Heart right ventricle (tissue), 16 donors: ENCODE measurements at regions of chr13 and their contacts with region 1.

Region 1: GRCh38 chr13:106917673-106918556 is 350.0 kb upstream of the ARGLU1 start:
- DNase-seq: peak; percentile 77 to 82
- ATAC-seq: peak; percentile 86 to 93 (median 90)
- H3K4me3 ChIP-seq: peak overlapping the region; percentile 45 to 76 (median 63)
- H3K27ac ChIP-seq: peak overlapping the region; percentile 84 to 98 (median 95)
- H3K4me1 ChIP-seq: peaks cover 0 to 48% (median 17%) of the 10 kb centered on the region in 9 donors
- H3K27me3 ChIP-seq: peaks cover 0 to 3% (median 0%) of the 10 kb centered on the region in 7 donors
- CTCF ChIP-seq: peak; percentile 87 to 98 (median 95)

Region 2: DNA sequence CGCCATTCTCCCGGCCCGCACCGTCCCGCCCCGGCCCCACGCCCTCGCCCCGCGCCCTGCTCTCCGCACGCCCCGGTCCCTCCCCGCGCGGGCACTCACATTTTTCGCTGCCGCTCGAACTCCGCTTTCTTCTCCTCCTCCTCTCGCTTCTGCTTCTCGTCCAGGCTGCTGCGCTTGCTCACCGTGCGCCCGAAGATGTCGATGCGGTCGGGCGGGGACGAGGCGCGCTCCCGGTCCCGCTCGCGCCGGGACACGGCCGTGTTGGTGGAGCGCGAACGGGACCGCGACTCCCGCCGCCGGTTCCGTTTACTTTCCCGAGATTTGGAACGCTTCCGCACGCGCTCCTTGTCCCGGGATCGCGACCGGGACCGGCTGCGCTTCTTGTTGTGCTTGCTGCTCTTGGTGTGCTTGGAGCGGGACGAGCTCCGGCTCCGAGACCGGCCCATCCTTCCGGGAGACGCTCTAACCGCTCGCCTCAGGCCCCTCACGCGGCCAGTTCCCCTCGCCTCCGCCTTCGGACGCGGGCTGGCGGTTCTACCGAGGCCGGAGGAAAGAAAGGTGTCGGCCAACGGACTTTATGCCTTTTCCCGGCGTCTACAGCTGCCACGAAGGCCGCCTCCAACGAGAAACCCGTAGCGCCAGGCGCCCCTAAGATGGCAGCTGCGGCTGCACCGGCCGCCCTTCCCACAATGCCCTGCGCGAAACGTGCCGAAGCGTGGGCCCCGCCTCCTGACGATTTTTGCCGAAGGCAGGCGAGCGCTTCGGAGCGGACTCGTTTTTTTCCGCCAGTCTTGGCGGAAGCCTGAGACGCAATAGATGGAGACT is 350.2 kb before region 1 on chr13 and contains the start of gene ARGLU1:
- intact Hi-C with region 1: loop called in 2 of 10 experiments (anchors 10 kb)
- DNase-seq: peak; percentile 94 to 96
- ATAC-seq: peak; percentile 90 to 98 (median 96)
- H3K4me3 ChIP-seq: peak within 1 kb of the TSS; percentile 66 to 96 (median 87)
- H3K27ac ChIP-seq: peak within 1 kb of the TSS; percentile 92 to 99 (median 97)
- H3K4me1 ChIP-seq: peaks cover 15 to 54% (median 44%) of the 10 kb centered on the region in 9 donors
- H3K27me3 ChIP-seq: no peaks in the 10 kb centered on the region
- CTCF ChIP-seq: no peak
- total RNA-seq, gene ARGLU1: 19.1 to 42.2 (median 29.6) TPM

Region 3: DNA sequence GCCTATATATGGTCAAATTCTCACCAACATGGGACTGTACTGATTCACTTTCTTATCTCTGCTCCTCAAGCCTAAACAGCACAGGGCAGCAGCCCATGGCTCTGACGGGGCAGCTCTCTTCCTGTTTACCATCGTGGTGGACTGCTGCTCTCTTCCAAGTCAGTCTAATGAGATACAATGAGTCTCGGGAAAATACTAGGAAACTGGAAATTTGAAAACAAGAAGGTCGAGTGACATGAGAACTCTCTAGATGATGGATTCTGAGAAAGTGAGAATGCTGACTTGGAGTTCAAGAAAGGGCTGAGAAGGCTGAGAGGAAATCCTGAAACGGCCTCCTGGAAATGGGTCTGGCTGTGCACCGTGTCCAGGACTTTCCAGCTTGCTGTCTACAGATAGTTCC is 227.1 kb before region 1 on chr13:
- intact Hi-C with region 1: loop called in 2 of 10 experiments (anchors 5 to 10 kb)
- DNase-seq: peak in 1 of 2 donors; percentile 14
- ATAC-seq: peak; percentile 34 to 84 (median 73)
- H3K4me3 ChIP-seq: no peak overlapping the region
- H3K27ac ChIP-seq: peak overlapping the region in 9 of 10 donors; percentile 8 to 74 (median 42)
- H3K4me1 ChIP-seq: peaks cover 0 to 24% (median 1%) of the 10 kb centered on the region in 9 donors
- H3K27me3 ChIP-seq: no peaks in the 10 kb centered on the region
- CTCF ChIP-seq: no peak

Region 4: DNA sequence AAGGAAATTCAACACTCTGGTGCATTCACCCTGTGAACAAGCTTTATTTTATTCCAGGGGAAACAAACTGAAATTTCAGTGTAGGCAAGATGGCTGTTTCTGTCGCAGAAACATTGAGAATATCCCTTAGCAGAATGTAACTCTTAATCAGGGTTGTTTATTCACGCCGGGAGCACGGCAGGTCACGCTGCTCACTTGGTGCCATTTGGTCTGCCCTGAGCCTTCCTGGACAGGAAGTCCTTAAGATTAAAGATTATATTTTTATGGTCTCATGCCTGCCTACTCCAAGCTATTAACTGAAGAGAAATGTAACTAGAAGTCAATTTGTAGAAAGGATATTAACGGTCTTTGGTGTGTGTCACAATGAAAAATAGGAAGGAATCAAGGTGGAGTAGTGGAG is 164.7 kb before region 1 on chr13:
- intact Hi-C with region 1: loop called in 3 of 10 experiments (anchors 5 to 10 kb)
- DNase-seq: peak; percentile 35 to 47
- ATAC-seq: peak in 7 of 8 donors; percentile 45 to 83 (median 79)
- H3K4me3 ChIP-seq: peak overlapping the region in 2 of 10 donors; percentile 15 to 19
- H3K27ac ChIP-seq: peak overlapping the region in 8 of 10 donors; percentile 31 to 71 (median 54)
- H3K4me1 ChIP-seq: peaks cover 0 to 43% (median 7%) of the 10 kb centered on the region in 9 donors
- H3K27me3 ChIP-seq: no peaks in the 10 kb centered on the region
- CTCF ChIP-seq: no peak

Region 5: DNA sequence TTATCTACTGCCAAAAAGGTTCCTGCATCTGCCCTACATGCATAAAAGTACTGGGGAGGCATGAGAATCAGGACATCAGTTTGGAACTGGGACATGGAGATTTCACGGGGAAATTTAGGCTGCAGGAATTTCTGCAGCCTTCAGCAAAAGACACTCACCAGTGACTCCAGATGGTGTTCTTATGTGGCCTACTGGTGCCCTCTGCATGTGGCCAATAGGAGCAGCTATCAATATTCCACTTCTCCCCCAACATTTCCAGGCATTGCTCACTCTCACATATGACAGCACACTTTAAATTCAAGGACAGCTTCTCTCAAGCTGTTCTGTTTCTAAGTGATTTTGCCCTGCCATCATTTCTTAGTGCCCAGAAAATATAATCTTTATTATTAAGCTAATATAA is 220.6 kb after region 1 on chr13:
- intact Hi-C with region 1: loop called in 2 of 10 experiments (anchors 5 kb)
- DNase-seq: no peak
- ATAC-seq: peak in 2 of 8 donors; percentile 25 to 34
- H3K4me3 ChIP-seq: no peak overlapping the region
- H3K27ac ChIP-seq: peak overlapping the region in 3 of 10 donors; percentile 7 to 56 (median 46)
- H3K4me1 ChIP-seq: peaks cover 0 to 35% (median 18%) of the 10 kb centered on the region in 9 donors
- H3K27me3 ChIP-seq: no peaks in the 10 kb centered on the region
- CTCF ChIP-seq: no peak